GM12878 (cell line): ENCODE measurements at regions of chr2 and their contacts with region 1.

Region 1: DNA sequence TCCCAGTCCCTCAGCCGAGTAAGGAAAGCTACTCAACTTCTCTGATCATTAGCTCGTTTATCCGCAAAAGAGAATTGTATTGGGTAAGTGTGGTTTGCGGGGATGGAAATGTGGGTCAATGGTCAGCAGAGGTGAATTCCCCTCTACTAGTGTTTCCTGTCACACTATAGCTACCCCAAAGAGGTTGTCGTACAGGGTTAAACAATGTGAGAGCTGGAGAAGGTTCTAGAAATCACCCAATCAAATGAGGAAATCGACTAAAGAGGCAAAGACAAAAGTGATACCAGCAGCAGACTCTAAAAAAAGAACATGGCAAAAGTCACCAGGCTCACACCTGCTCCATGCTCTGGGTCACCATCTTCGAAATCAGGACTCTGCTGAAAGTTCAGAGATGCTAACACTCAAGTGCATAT is 144.7 kb upstream of the ITGA4 start:
- DNase-seq: peak; percentile 99
- ATAC-seq: peak; percentile 87
- H3K4me3 ChIP-seq: 0 out of 2 replicates have a peak overlapping the region, but pooled peaks have one; percentile 6
- H3K27ac ChIP-seq: peak overlapping the region; percentile 99
- H3K4me1 ChIP-seq: peaks cover 49% of the 10 kb centered on the region
- H3K27me3 ChIP-seq: no peaks in the 10 kb centered on the region
- CTCF ChIP-seq: no peak
- EP300 ChIP-seq: peak; percentile 69 to 90; a peak in 3 of 4 replicates
- POLR2A ChIP-seq: peak; percentile 58
- RAD21 ChIP-seq: peak; percentile 35

Region 2: DNA sequence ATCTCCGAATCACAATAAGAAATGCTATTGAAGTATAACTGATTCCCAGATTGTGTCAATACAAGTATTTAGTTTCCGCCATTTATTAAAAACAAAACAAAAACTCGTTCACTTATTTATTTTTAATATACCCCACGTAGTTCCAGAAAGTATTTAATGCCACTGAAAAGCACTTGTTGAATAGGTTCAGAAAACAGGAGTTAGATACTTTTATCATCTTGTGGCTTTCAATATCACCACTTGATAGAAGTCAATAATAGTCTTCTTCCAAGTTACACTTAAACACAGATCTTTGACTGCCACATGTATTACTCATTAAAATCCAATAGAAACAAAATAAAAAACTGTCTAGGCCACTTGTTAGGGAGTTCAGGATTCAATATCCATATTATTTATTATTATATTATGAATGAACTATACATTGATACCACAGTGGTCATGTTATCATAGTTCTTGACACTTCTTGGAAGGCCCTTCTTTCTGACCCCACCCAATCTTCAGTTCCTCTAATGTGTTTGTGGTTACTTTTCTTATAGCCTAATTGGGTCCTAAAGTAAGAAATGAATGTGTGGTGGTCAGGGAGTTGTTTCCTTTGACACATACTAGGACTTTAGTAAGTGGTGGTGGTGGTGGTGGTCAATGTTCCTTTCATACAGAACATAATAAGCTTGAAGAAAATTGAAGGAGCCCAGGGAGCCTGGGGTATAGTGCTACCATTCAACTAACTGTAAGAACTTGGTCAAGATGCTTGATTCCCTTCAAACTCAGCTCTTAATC is 76.7 kb before region 1 on chr2:
- CTCF ChIA-PET with region 1: no interaction called
- POLR2A ChIA-PET with region 1: no interaction called
- RAD21 ChIA-PET with region 1: interaction called, 4 read pairs
- SMC1A ChIA-PET with region 1: interaction called, 5 read pairs
- in situ Hi-C with region 1: no loop called
- intact Hi-C with region 1: loop called (anchors 1 kb)
- DNase-seq: peak; percentile 82
- ATAC-seq: peak; percentile 92
- H3K4me3 ChIP-seq: no peak overlapping the region
- H3K27ac ChIP-seq: no peak overlapping the region
- H3K4me1 ChIP-seq: peaks cover 18% of the 10 kb centered on the region
- H3K27me3 ChIP-seq: no peaks in the 10 kb centered on the region; a peak in 1 of 4 replicates
- CTCF ChIP-seq: no peak
- EP300 ChIP-seq: peak; percentile 84 to 91; a peak in 3 of 4 replicates
- POLR2A ChIP-seq: no peak
- RAD21 ChIP-seq: peak; percentile 32; the same call in 1 of the 2 replicates

Region 3: GRCh38 chr2:181334158-181334826 is 21.8 kb after region 1 on chr2:
- CTCF ChIA-PET with region 1: interaction called, 5 read pairs
- POLR2A ChIA-PET with region 1: interaction called, 4 read pairs
- RAD21 ChIA-PET with region 1: interaction called, 5 read pairs
- SMC1A ChIA-PET with region 1: interaction called, 23 read pairs
- in situ Hi-C with region 1: no loop called
- intact Hi-C with region 1: no loop called
- DNase-seq: no peak
- ATAC-seq: peak; percentile 83
- H3K4me3 ChIP-seq: no peak overlapping the region
- H3K27ac ChIP-seq: no peak overlapping the region
- H3K4me1 ChIP-seq: no peaks in the 10 kb centered on the region
- H3K27me3 ChIP-seq: no peaks in the 10 kb centered on the region
- CTCF ChIP-seq: no peak
- EP300 ChIP-seq: no peak
- POLR2A ChIP-seq: no peak
- RAD21 ChIP-seq: no peak

Region 4: GRCh38 chr2:181348107-181348837 is 35.8 kb after region 1 on chr2:
- CTCF ChIA-PET with region 1: interaction called, 10 read pairs
- POLR2A ChIA-PET with region 1: interaction called, 4 read pairs
- RAD21 ChIA-PET with region 1: interaction called, 26 read pairs
- SMC1A ChIA-PET with region 1: interaction called, 37 read pairs
- in situ Hi-C with region 1: no loop called
- intact Hi-C with region 1: no loop called
- DNase-seq: peak; percentile 66
- ATAC-seq: peak; percentile 96
- H3K4me3 ChIP-seq: no peak overlapping the region
- H3K27ac ChIP-seq: peak overlapping the region; percentile 68
- H3K4me1 ChIP-seq: peaks cover 12% of the 10 kb centered on the region; the same call in 1 of the 2 replicates
- H3K27me3 ChIP-seq: no peaks in the 10 kb centered on the region
- CTCF ChIP-seq: no peak
- EP300 ChIP-seq: peak; percentile 50 to 54; a peak in 1 of 4 replicates
- POLR2A ChIP-seq: no peak
- RAD21 ChIP-seq: no peak

Region 5: DNA sequence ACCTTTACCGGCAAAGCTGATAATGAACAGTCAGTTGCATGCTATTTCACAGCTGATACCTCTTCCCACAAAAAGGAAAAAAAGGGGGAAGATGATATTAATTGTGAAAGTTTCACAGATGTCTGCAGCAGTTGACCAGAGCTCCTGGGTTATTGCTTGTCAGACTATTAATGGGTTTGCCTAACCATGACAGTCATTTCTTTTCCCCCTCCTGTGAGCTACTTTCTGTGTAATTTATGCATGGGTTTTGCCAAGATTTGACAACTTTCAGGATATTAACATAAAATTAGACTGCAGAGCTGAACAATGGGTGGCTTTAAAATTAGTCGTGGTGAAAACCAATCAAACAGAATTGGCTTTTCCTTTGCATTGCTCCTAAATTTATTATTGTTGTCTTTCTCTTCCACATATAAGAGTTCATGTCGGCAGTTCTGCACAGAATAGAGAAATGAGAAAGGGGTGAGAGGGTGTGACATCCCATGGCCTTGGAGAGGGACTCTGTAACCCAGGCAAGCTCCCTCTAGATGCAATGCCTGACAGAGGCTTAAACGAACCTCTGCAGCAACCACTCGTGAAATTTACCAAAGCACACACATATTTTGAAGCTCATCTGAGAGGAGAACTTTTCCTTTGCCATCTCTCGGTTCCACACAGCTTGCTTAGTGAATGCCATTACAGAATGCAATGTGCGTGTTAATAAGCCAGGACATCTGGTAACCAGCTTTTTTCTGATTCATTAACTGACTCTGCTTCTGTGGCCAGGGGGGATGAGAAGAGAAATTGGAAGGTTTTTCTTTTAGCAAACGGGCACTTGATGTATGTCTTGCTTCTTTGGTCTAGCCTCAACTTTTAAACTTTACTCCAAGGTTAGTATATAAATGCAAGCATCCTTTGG is 62.5 kb after region 1 on chr2:
- CTCF ChIA-PET with region 1: interaction called, 5 read pairs
- POLR2A ChIA-PET with region 1: interaction called, 5 read pairs
- RAD21 ChIA-PET with region 1: interaction called, 13 read pairs
- SMC1A ChIA-PET with region 1: interaction called, 36 read pairs
- in situ Hi-C with region 1: no loop called
- intact Hi-C with region 1: no loop called
- DNase-seq: peak; percentile 42
- ATAC-seq: peak; percentile 87
- H3K4me3 ChIP-seq: peak overlapping the region; percentile 4; the same call in 1 of the 2 replicates
- H3K27ac ChIP-seq: peak overlapping the region; percentile 38; the same call in 1 of the 2 replicates
- H3K4me1 ChIP-seq: peaks cover 29% of the 10 kb centered on the region
- H3K27me3 ChIP-seq: no peaks in the 10 kb centered on the region
- CTCF ChIP-seq: no peak
- EP300 ChIP-seq: no peak
- POLR2A ChIP-seq: no peak
- RAD21 ChIP-seq: no peak

Region 6: GRCh38 chr2:181411105-181411849 is 98.8 kb after region 1 on chr2:
- CTCF ChIA-PET with region 1: interaction called, 3 read pairs
- POLR2A ChIA-PET with region 1: no interaction called
- RAD21 ChIA-PET with region 1: interaction called, 7 read pairs
- SMC1A ChIA-PET with region 1: interaction called, 13 read pairs
- in situ Hi-C with region 1: no loop called
- intact Hi-C with region 1: no loop called
- DNase-seq: peak; percentile 30
- ATAC-seq: peak; percentile 86
- H3K4me3 ChIP-seq: no peak overlapping the region
- H3K27ac ChIP-seq: no peak overlapping the region
- H3K4me1 ChIP-seq: peaks cover 8% of the 10 kb centered on the region
- H3K27me3 ChIP-seq: no peaks in the 10 kb centered on the region
- CTCF ChIP-seq: no peak
- EP300 ChIP-seq: no peak
- POLR2A ChIP-seq: no peak
- RAD21 ChIP-seq: no peak

Region 7: DNA sequence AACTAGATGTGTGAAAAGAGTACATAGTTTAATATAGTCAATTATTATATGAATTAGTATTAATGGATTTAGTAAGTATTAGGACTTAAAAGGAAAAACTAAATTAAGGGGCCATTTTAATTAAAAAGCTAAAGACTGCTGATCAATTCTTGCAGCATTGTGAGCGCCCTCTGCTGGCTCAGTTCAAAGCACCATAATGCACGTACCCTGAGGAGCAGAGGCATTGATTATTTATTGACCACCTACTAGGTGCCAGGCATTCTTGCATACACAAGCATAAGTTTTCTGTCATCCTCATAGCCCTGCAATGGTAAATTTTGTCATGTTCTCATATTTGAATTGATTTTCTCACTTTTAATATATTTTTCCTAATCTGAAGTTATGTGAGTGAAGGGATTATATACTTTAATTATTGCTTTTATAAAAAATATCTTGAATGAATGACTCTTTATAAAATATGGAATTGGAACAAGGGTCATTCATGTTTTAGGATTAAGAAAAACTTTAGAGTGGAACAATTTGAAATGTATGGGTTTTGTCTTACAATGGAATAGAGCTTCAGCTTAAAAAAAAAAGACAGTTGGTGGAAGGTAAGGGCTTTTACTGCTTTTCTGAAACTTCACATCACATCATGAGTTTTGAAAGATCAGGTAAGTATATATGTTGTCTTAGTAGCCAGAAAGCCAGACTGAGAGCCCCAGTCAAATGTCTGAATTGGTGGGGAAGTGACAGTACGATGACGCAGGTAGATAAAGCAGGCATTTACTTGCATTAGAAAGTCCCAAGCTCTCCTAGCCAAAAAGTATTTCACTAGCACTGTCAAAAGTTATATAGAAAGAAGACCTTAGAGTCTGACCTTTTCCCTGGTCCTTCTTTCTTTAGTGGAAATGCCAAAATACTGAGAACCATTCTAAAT is 154.4 kb after region 1 on chr2:
- CTCF ChIA-PET with region 1: interaction called, 235 read pairs
- POLR2A ChIA-PET with region 1: interaction called, 12 read pairs
- RAD21 ChIA-PET with region 1: interaction called, 340 read pairs
- SMC1A ChIA-PET with region 1: interaction called, 313 read pairs
- in situ Hi-C with region 1: no loop called
- intact Hi-C with region 1: no loop called
- DNase-seq: no peak
- ATAC-seq: peak; percentile 66
- H3K4me3 ChIP-seq: no peak overlapping the region
- H3K27ac ChIP-seq: no peak overlapping the region
- H3K4me1 ChIP-seq: peaks cover 31% of the 10 kb centered on the region
- H3K27me3 ChIP-seq: no peaks in the 10 kb centered on the region
- CTCF ChIP-seq: peak; percentile 74 to 81 (median 79)
- EP300 ChIP-seq: no peak
- POLR2A ChIP-seq: no peak
- RAD21 ChIP-seq: peak; percentile 70